ENCODE measurements at regions of chr9 and their contacts with region 1.

Region 1: GRCh38 chr9:137108608-137109249 is 5.8 kb downstream of the DPP7 start:
- DNase-seq: no peak
- H3K4me3 ChIP-seq: no peak overlapping the region
- H3K27ac ChIP-seq: no peak overlapping the region
- H3K4me1 ChIP-seq: no peaks in the 10 kb centered on the region
- H3K27me3 ChIP-seq: no peaks in the 10 kb centered on the region
- CTCF ChIP-seq: no peak
- POLR2A ChIP-seq: no peak

Region 2: GRCh38 chr9:137129456-137130175 is 20.9 kb after region 1 on chr9:
- intact Hi-C with region 1: no loop called
- DNase-seq: peak; percentile 76 to 80
- H3K4me3 ChIP-seq: peak overlapping the region; percentile 63 to 82 (median 80)
- H3K27ac ChIP-seq: peak overlapping the region; percentile 73 to 75
- H3K4me1 ChIP-seq: peaks cover 0 to 13% of the 10 kb centered on the region in 2 donors
- H3K27me3 ChIP-seq: no peaks in the 10 kb centered on the region
- CTCF ChIP-seq: no peak
- POLR2A ChIP-seq: no peak

Region 3: DNA sequence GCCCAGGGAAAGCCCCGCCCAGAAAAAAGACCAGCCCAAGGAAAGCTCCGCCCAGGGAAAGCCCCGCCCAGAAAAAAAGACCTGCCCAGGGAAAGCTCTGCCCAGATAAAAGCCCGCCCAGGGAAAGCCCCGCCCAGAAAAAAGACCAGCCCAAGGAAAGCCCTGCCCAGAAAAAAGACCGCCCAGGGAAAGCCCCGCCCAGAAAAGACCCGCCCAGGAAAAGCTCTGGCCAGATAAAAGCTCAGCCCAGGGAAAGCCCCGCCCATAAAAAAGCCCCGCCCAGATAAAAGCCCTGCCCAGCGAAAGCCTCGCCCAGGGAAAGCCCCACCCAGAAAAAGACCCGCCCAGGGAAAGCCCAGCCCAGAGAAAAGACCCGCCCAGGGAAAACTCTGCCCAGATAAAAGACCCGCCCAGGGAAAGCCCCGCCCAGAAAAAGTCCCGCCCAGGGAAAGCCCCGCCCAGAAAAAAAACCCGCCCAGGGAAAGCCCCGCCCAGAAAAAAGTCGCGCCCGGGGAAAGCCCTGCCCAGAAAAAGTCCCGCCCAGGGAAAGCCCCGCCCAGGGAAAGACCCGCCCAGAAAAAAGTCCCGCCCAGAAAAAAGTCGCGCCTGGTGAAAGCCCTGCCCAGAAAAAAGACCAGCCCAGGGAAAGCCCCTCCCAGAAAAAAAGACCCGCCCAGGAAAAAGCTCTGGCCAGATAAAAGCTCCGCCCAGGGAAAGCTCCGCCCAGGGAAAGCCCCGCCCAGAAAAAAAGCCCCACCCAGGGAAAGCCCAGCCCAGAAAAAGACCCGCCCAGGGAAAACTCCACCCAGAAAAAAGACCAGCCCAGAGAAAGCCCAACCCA is 42.1 kb after region 1 on chr9:
- intact Hi-C with region 1: loop called (anchors 1 kb)
- DNase-seq: no peak
- H3K4me3 ChIP-seq: no peak overlapping the region
- H3K27ac ChIP-seq: no peak overlapping the region
- H3K4me1 ChIP-seq: no peaks in the 10 kb centered on the region
- H3K27me3 ChIP-seq: peaks cover 0 to 46% of the 10 kb centered on the region in 2 donors
- CTCF ChIP-seq: no peak
- POLR2A ChIP-seq: no peak

Region 4: GRCh38 chr9:137286975-137287383 is 178.2 kb after region 1 on chr9:
- intact Hi-C with region 1: no loop called
- DNase-seq: no peak
- H3K4me3 ChIP-seq: no peak overlapping the region
- H3K27ac ChIP-seq: no peak overlapping the region
- H3K4me1 ChIP-seq: no peaks in the 10 kb centered on the region
- H3K27me3 ChIP-seq: no peaks in the 10 kb centered on the region
- CTCF ChIP-seq: peak in 2 of 3 donors; percentile 56 to 58
- POLR2A ChIP-seq: no peak